ENCODE measurements at regions of chr1 and their contacts with region 1.

Region 1: GRCh38 chr1:200620273-200621131 is at the start of gene KIF14:
- DNase-seq: peak; percentile 78 to 96
- H3K4me3 ChIP-seq: peak within 1 kb of the TSS; percentile 79
- H3K27ac ChIP-seq: peak within 1 kb of the TSS; percentile 53 to 69
- H3K4me1 ChIP-seq: peaks cover 0 to 4% of the 10 kb centered on the region in 2 donors
- H3K27me3 ChIP-seq: no peaks in the 10 kb centered on the region
- CTCF ChIP-seq: no peak
- total RNA-seq, gene KIF14: not detected

Region 2: GRCh38 chr1:200669314-200670241 is 49.1 kb after region 1 on chr1 and contains the start of gene DDX59:
- intact Hi-C with region 1: loop called (anchors 1 kb)
- DNase-seq: peak; percentile 88 to 98
- H3K4me3 ChIP-seq: peak within 1 kb of the TSS; percentile 72 to 81
- H3K27ac ChIP-seq: peak within 1 kb of the TSS; percentile 95 to 99
- H3K4me1 ChIP-seq: peaks cover 0 to 28% of the 10 kb centered on the region in 2 donors
- H3K27me3 ChIP-seq: no peaks in the 10 kb centered on the region
- CTCF ChIP-seq: no peak
- total RNA-seq, gene DDX59: 7.6 TPM

Region 3: DNA sequence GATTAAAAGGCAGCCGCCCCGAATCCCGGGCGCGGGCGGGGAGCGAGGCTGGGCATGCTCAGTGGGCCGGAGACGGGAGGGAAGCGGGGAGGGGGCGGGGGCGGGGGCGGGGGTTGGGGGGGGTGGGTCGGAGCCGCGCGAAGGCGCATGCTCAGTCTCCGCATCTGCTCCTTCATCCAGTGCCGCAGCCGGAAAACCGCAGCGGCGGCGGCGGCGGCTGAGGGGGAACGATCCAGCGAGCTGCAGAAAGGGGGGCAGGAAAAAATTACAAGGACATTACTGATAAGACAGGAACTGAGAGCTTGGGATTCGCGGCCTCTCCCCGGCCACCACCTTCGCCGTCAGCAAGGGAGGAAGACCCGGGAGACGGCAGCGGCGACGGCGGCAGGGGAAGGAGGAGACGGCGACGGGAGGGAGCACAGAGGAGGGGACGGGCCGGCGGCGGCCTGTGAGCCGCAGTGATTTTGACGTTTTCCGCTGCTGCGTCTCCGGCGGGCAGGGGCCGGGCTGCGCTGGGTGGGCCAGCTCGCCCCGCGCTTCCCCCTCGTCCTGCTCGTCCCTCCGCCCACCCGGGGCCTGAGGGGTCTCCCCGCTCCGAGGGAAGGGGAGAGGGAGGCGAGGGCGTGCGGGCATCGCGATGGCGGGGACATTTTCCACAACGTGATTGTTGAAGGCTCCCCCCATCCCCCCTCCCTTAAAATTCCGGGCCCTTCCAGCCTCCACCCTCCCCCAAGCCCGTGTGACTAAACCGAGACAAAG is 118.4 kb after region 1 on chr1 and contains the start of gene CAMSAP2:
- intact Hi-C with region 1: loop called (anchors 1 kb)
- DNase-seq: peak; percentile 47 to 96
- H3K4me3 ChIP-seq: peak within 1 kb of the TSS; percentile 77 to 99
- H3K27ac ChIP-seq: peak within 1 kb of the TSS; percentile 97 to 100
- H3K4me1 ChIP-seq: peaks cover 0 to 15% of the 10 kb centered on the region in 2 donors
- H3K27me3 ChIP-seq: no peaks in the 10 kb centered on the region
- CTCF ChIP-seq: no peak
- total RNA-seq, gene CAMSAP2: 22.4 TPM

Region 4: GRCh38 chr1:201114236-201115131 is 494.0 kb after region 1 on chr1:
- intact Hi-C with region 1: loop called (anchors 5 kb)
- DNase-seq: peak; percentile 37 to 93
- H3K4me3 ChIP-seq: peak overlapping the region; percentile 66 to 74
- H3K27ac ChIP-seq: peak overlapping the region in 1 of 2 donors; percentile 29
- H3K4me1 ChIP-seq: no peaks in the 10 kb centered on the region
- H3K27me3 ChIP-seq: no peaks in the 10 kb centered on the region
- CTCF ChIP-seq: peak; percentile 82 to 88 (median 87)